ENCODE measurements at regions of chr10 and their contacts with region 1.

Region 1: DNA sequence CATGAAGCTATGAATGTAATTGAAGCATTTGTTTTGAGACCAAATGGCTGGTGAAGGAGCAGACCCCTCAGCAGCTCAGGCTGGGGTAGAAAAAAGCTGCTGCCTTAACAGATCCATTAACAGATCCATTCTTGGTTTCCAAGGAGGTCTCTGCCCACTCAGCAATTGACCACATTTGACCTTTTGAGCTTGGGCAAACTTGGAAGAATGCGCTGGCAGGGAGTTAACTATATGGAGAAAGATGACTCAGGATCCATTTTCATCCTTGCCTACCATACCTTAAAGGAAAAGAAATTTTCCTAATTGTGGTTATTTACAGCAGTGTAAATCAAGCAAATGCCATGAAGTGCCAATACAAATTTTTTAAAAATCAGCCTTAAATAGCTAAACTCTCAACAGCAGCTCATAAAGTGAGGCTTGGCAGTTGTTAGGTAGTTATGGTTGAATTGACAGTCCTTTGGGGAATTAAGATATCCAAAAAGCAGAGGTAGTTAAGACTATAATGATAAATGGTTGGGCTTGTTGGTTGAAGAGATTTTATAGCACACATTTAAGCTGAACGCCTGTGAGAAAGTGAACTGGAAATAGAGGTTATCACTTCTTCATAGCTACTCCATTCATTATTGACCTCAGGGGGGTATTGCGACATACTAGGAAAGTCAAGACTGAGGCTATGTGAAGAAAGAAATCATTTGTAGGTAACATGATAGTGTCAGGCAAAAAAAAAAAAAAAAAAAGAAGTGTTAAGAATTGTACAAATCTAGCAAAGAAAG is 83.9 kb downstream of the MKX start:
- DNase-seq: no peak
- ATAC-seq: no peak
- H3K4me3 ChIP-seq: no peak overlapping the region
- H3K27ac ChIP-seq: no peak overlapping the region
- H3K4me1 ChIP-seq: no peaks in the 10 kb centered on the region
- H3K27me3 ChIP-seq: no peaks in the 10 kb centered on the region
- CTCF ChIP-seq: no peak

Region 2: GRCh38 chr10:27446091-27446918 is 215.4 kb before region 1 on chr10:
- CTCF ChIA-PET with region 1: no interaction called
- POLR2A ChIA-PET with region 1: no interaction called
- in situ Hi-C with region 1: no loop called
- intact Hi-C with region 1: loop called (anchors 10 kb)
- DNase-seq: no peak
- ATAC-seq: peak; percentile 48; the same call in 1 of the 2 replicates
- H3K4me3 ChIP-seq: no peak overlapping the region
- H3K27ac ChIP-seq: no peak overlapping the region
- H3K4me1 ChIP-seq: no peaks in the 10 kb centered on the region
- H3K27me3 ChIP-seq: no peaks in the 10 kb centered on the region
- CTCF ChIP-seq: peak; percentile 45; the same call in 1 of the 2 replicates

Region 3: DNA sequence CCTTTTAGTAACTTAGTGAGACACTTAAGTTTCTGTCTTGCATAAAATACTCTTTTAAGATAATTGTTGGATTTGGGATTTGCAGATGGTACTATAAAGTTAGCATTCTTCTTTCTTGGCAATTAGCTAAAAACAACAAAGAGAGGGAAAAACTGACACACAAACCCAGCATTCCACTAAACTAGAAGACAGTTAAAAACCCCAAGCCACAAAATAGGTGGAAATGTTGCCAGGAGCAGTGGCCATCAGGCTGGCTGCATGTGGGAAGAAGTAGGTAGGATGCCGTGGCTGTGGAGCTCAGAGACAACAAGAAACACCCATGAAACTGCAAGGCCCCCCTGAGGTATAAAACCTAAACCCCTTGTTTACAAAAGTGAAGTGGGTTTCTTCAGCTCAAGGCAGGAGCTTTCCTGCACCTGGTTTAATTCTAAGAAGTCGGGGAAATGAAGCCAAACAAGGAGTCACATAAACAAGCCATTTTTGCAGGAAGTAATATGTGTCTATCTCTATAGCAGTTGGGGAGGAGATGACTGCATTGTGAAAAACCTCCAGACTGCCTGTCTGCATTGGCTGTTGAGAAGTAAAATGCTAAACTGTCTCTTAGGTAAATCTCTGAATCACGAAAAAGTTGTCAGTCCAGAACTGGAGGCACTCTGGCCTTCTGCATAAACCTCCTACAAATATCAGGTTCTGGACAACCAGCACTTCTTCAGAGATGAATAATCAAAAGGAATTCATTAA is 148.1 kb before region 1 on chr10:
- CTCF ChIA-PET with region 1: no interaction called
- POLR2A ChIA-PET with region 1: no interaction called
- in situ Hi-C with region 1: no loop called
- intact Hi-C with region 1: no loop called
- DNase-seq: no peak
- ATAC-seq: no peak
- H3K4me3 ChIP-seq: no peak overlapping the region
- H3K27ac ChIP-seq: no peak overlapping the region
- H3K4me1 ChIP-seq: no peaks in the 10 kb centered on the region
- H3K27me3 ChIP-seq: no peaks in the 10 kb centered on the region
- CTCF ChIP-seq: no peak

Region 4: DNA sequence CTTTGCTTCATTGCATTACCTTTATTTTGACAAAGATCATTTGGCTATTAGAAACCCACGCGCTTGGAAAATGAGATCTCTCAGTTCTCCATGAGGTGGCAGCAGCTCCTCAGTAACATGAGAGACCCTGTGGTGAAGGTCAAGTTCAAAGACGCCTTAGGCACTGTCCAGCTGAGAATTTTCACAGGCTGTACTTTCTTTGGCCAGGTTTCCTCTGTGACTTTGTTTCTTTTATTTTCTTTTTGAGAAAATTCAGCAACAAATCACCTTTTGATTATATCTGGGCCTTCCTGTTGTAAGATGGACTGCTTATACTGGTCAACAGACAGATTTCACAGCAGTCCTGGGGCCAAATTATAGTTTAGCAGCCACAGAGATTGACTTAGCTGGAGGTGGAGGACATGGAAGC is 103.1 kb before region 1 on chr10:
- CTCF ChIA-PET with region 1: interaction called, 10 read pairs
- POLR2A ChIA-PET with region 1: no interaction called
- in situ Hi-C with region 1: no loop called
- intact Hi-C with region 1: loop called (anchors 5 kb)
- DNase-seq: peak; percentile 22
- ATAC-seq: peak; percentile 70; the same call in 1 of the 2 replicates
- H3K4me3 ChIP-seq: no peak overlapping the region
- H3K27ac ChIP-seq: no peak overlapping the region
- H3K4me1 ChIP-seq: no peaks in the 10 kb centered on the region
- H3K27me3 ChIP-seq: no peaks in the 10 kb centered on the region
- CTCF ChIP-seq: peak; percentile 74

Region 5: GRCh38 chr10:27646224-27647175 is 15.2 kb before region 1 on chr10:
- CTCF ChIA-PET with region 1: no interaction called
- POLR2A ChIA-PET with region 1: interaction called, 18 read pairs
- in situ Hi-C with region 1: no loop called
- intact Hi-C with region 1: no loop called
- DNase-seq: no peak
- ATAC-seq: no peak
- H3K4me3 ChIP-seq: no peak overlapping the region
- H3K27ac ChIP-seq: no peak overlapping the region
- H3K4me1 ChIP-seq: no peaks in the 10 kb centered on the region
- H3K27me3 ChIP-seq: no peaks in the 10 kb centered on the region
- CTCF ChIP-seq: no peak

Region 6: DNA sequence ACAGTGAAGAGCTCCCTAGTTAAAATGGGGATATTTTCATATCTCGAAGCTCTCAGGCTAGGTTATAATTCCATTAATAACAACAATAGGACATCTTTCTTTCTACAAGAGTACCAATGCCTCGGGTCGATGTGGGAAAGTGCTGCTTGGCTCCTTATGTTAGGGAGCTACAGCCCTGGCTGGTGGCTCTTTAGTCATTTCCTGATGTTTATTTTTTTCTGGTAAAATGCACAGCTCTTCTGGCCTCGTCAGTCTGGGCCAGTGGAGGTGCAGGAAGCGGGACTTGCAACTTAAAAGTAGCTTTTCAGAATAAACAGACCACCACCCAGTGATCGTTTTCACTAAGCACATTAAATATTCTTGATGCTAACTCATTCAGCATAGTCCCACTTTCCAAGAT is 25.6 kb after region 1 on chr10:
- CTCF ChIA-PET with region 1: no interaction called
- POLR2A ChIA-PET with region 1: no interaction called
- in situ Hi-C with region 1: no loop called
- intact Hi-C with region 1: no loop called
- DNase-seq: no peak
- ATAC-seq: no peak
- H3K4me3 ChIP-seq: no peak overlapping the region
- H3K27ac ChIP-seq: no peak overlapping the region
- H3K4me1 ChIP-seq: no peaks in the 10 kb centered on the region
- H3K27me3 ChIP-seq: no peaks in the 10 kb centered on the region
- CTCF ChIP-seq: no peak